ENCODE measurements at regions of chr12 and their contacts with region 1.

Region 1: GRCh38 chr12:106223485-106224354 is 24.1 kb downstream of the CKAP4 start:
- DNase-seq: peak; percentile 49 to 82 (median 71)
- ATAC-seq: peak; percentile 63
- H3K4me3 ChIP-seq: no peak overlapping the region
- H3K4me3 Mint-ChIP-seq: no peak overlapping the region
- H3K27ac ChIP-seq: no peak overlapping the region
- H3K27ac Mint-ChIP-seq: no peak overlapping the region
- H3K4me1 ChIP-seq: peaks cover 18% of the 10 kb centered on the region
- H3K4me1 Mint-ChIP-seq: peaks cover 18% of the 10 kb centered on the region
- H3K27me3 ChIP-seq: no peaks in the 10 kb centered on the region
- H3K27me3 Mint-ChIP-seq: peaks cover 6% of the 10 kb centered on the region
- CTCF ChIP-seq: peak; percentile 90

Region 2: GRCh38 chr12:106213662-106214061 is 10.1 kb before region 1 on chr12:
- CTCF ChIA-PET with region 1: interaction called, 21 read pairs
- POLR2A ChIA-PET with region 1: no interaction called
- intact Hi-C with region 1: no loop called
- DNase-seq: no peak
- ATAC-seq: no peak
- H3K4me3 ChIP-seq: no peak overlapping the region
- H3K4me3 Mint-ChIP-seq: no peak overlapping the region
- H3K27ac ChIP-seq: no peak overlapping the region
- H3K27ac Mint-ChIP-seq: no peak overlapping the region
- H3K4me1 ChIP-seq: no peaks in the 10 kb centered on the region
- H3K4me1 Mint-ChIP-seq: no peaks in the 10 kb centered on the region
- H3K27me3 ChIP-seq: peaks cover 0 to 2% of the 10 kb centered on the region in 2 experiments
- H3K27me3 Mint-ChIP-seq: peaks cover 40% of the 10 kb centered on the region
- CTCF ChIP-seq: no peak

Region 3: DNA sequence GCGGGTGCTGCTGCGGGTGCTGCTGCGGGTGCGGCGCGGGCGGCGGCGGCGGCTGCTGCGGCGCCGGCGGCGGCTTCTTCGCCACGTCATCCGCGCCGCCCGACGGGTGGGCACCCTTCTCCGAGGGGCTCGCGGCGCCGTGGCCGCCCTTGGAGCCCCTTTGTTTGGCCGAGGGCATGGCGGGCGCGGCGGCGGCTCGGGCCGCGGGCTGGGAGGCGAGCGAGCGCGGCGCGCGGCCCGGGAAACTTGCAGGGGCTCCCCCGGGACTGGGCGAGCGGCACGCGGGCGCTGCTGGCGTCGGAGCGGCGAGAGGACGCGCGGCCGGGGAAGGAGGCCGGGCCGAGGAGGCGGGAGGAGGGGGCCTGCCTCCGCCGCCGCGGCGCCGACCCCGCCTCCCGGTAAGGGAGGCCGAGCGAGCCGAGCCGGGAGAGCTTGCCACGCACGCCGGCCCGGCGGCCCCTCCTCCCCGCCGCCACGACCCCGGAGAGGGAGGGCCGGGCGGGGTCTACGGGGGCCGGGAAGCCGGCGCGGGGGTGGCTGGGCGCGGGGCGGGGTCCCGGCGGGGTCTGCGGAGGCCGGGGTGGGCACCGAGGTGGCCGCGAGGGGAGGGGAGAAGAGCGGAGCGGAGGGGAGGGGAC is 24.1 kb after region 1 on chr12 and contains the start of gene CKAP4:
- CTCF ChIA-PET with region 1: interaction called, 14 read pairs
- POLR2A ChIA-PET with region 1: interaction called, 6 read pairs
- intact Hi-C with region 1: loop called in 1 of 2 experiments (anchors 1 kb)
- DNase-seq: peak; percentile 10 to 83 (median 58)
- ATAC-seq: peak; percentile 55
- H3K4me3 ChIP-seq: peak within 1 kb of the TSS; percentile 66 to 84
- H3K4me3 Mint-ChIP-seq: peak within 1 kb of the TSS; percentile 86
- H3K27ac ChIP-seq: peak within 1 kb of the TSS; percentile 72 to 73
- H3K27ac Mint-ChIP-seq: peak within 1 kb of the TSS; percentile 95
- H3K4me1 ChIP-seq: peaks cover 32% of the 10 kb centered on the region
- H3K4me1 Mint-ChIP-seq: peaks cover 35% of the 10 kb centered on the region
- H3K27me3 ChIP-seq: no peaks in the 10 kb centered on the region
- H3K27me3 Mint-ChIP-seq: no peaks in the 10 kb centered on the region
- CTCF ChIP-seq: no peak
- total RNA-seq, gene CKAP4: 19.3 to 19.7 TPM

Region 4: GRCh38 chr12:106282457-106283097 is 58.9 kb after region 1 on chr12:
- CTCF ChIA-PET with region 1: interaction called, 81 read pairs
- POLR2A ChIA-PET with region 1: interaction called, 4 read pairs
- intact Hi-C with region 1: loop called (anchors 1 kb)
- DNase-seq: peak in 7 of 9 experiments; percentile 29 to 76 (median 54)
- ATAC-seq: peak; percentile 83
- H3K4me3 ChIP-seq: no peak overlapping the region
- H3K4me3 Mint-ChIP-seq: no peak overlapping the region
- H3K27ac ChIP-seq: no peak overlapping the region
- H3K27ac Mint-ChIP-seq: no peak overlapping the region
- H3K4me1 ChIP-seq: no peaks in the 10 kb centered on the region
- H3K4me1 Mint-ChIP-seq: peaks cover 4% of the 10 kb centered on the region
- H3K27me3 ChIP-seq: no peaks in the 10 kb centered on the region
- H3K27me3 Mint-ChIP-seq: peaks cover 10% of the 10 kb centered on the region
- CTCF ChIP-seq: peak; percentile 83

Region 5: DNA sequence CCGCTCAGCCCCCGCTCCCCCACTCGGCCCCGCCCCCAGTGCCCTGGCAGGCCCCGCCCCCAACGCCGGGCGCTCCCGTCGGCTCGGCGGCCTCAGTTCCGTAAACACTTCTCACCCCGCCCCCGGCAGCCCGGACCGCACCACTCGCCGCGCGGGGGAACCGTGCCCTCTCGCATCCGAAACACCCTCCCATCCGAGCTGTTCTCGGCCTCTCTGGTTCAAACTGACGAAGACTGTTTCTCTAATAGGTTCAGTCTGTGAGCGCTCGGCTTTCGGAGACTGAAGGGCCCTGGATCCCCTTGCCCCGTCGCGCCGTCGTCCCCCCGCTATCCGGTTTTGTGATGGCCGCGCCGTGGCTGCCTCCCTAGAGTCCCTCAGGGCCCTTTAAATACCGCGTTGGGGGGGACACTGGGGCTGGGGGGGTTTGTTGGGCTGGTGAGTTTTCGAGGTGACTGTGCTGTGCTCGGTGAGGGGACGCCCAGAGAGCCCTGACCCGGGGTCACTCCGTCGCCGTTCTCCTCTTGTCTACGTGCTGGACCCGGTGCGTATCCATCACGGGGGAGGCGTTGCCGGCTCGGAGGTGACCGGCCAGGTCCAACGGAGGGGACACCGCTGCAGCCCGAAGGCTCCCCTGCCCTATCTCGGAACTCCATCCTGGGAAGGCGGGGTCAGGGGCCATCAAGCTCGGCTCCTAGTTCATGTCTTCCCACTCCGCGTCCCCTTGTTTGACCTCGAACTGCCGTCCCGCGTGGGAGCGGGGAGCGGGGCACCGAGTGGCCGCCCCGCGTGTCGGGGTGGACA is 78.9 kb after region 1 on chr12 and contains the start of gene TCP11L2:
- CTCF ChIA-PET with region 1: interaction called, 32 read pairs
- POLR2A ChIA-PET with region 1: interaction called, 22 read pairs
- intact Hi-C with region 1: loop called (anchors 1 to 2 kb)
- DNase-seq: peak; percentile 88 to 96 (median 93)
- ATAC-seq: peak; percentile 63
- H3K4me3 ChIP-seq: peak within 1 kb of the TSS; percentile 98 to 100
- H3K4me3 Mint-ChIP-seq: peak within 1 kb of the TSS; percentile 96
- H3K27ac ChIP-seq: peak within 1 kb of the TSS; percentile 99 to 100
- H3K27ac Mint-ChIP-seq: peak within 1 kb of the TSS; percentile 100
- H3K4me1 ChIP-seq: peaks cover 51% of the 10 kb centered on the region
- H3K4me1 Mint-ChIP-seq: peaks cover 61% of the 10 kb centered on the region
- H3K27me3 ChIP-seq: no peaks in the 10 kb centered on the region
- H3K27me3 Mint-ChIP-seq: no peaks in the 10 kb centered on the region
- CTCF ChIP-seq: no peak
- total RNA-seq, gene TCP11L2: 130 to 133 TPM

Region 6: DNA sequence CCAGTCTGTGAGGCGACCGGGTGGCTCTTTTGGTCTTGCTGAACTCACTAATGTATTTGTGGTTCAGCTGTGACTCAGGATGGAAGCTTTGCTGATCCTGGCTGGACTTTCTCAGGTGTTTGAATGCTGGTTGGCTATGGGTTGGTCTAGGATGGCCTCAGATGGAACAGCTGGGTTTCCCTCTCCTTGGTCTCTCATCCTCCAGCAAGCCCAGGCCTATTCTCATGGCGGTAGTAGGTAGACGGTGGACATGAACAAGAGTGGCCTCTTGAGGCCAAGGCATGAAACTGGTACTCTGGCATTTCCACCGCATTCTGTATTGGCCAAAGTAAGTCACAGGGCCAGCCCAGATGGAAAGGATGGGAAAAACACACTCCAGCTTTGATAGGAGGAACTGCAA is 122.0 kb after region 1 on chr12:
- CTCF ChIA-PET with region 1: interaction called, 8 read pairs
- POLR2A ChIA-PET with region 1: no interaction called
- intact Hi-C with region 1: loop called in 1 of 2 experiments (anchors 1 kb)
- DNase-seq: peak in 2 of 9 experiments; percentile 33 to 41
- ATAC-seq: peak; percentile 38
- H3K4me3 ChIP-seq: no peak overlapping the region
- H3K4me3 Mint-ChIP-seq: no peak overlapping the region
- H3K27ac ChIP-seq: no peak overlapping the region
- H3K27ac Mint-ChIP-seq: peak overlapping the region; percentile 53
- H3K4me1 ChIP-seq: no peaks in the 10 kb centered on the region
- H3K4me1 Mint-ChIP-seq: no peaks in the 10 kb centered on the region
- H3K27me3 ChIP-seq: no peaks in the 10 kb centered on the region
- H3K27me3 Mint-ChIP-seq: no peaks in the 10 kb centered on the region
- CTCF ChIP-seq: no peak

Region 7: DNA sequence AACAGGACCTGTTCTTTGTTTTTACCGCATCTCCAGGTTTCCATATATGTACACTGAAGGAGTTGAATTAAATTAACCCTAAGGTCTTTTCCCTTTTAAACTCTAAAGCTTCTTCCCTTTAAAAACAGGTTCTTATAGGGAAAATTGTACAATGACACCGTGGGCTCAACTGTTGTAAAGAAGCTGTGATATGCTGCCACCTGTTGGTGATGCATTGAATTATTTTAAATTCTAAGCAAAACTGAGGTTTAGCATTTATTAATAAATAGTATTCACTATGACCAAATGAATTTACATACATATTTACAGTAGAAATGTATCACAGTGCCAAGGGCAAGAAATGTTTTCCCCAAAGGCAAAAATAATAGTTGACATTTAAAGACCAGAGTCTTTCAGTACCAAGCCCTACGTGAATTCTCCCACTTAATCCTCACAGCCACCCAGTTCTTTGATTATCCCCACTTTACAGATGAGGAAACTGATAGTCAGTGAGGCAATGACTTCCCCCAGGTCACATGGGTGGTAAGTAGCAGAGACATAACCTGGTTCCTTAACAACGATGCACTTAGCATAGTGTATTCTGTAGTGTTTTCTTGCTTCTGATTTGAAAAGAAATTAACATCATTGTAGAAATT is 696.3 kb after region 1 on chr12:
- CTCF ChIA-PET with region 1: no interaction called
- POLR2A ChIA-PET with region 1: no interaction called
- intact Hi-C with region 1: loop called in 1 of 2 experiments (anchors 10 kb)
- DNase-seq: peak in 3 of 9 experiments; percentile 32 to 67 (median 58)
- ATAC-seq: no peak
- H3K4me3 ChIP-seq: no peak overlapping the region
- H3K4me3 Mint-ChIP-seq: no peak overlapping the region
- H3K27ac ChIP-seq: no peak overlapping the region
- H3K27ac Mint-ChIP-seq: no peak overlapping the region
- H3K4me1 ChIP-seq: peaks cover 7% of the 10 kb centered on the region
- H3K4me1 Mint-ChIP-seq: peaks cover 9% of the 10 kb centered on the region
- H3K27me3 ChIP-seq: no peaks in the 10 kb centered on the region
- H3K27me3 Mint-ChIP-seq: peaks cover 3% of the 10 kb centered on the region
- CTCF ChIP-seq: peak; percentile 95

Measured in CD8-positive, alpha-beta T cell (primary cell).